K562 (cell line): ENCODE measurements at regions of chr22 and their contacts with region 1.

Region 1: DNA sequence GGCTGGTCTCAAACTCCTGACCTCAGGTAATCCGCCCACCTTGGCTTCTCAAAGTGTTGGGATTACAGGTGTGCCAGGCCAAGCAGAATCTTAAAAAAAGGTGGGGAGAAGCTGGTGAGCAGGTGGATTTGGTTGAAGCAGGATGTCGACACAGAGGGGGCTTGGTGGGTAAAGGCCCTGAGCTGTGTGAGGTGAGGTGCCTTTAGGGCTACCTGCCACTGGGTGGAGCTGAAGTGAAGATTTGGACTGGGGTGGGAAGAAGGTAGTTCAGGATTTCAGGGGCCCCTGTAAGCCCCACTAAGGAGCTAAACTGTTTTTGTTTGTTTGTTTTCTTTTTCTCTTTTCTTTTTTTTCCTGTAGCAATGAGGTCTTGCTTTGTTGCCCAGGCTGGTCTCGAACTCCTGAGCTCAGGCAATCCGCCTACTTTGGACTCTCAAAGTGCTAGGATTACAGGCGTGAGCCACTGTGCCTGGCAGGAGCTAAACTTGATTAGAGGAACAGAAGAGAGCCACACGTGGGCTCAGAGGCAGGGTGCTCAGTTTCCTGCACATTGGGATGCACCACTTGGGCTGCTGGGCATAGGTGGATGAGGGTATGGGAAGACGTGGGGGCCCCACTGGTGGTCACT is 6.0 kb downstream of the P2RX6 start:
- DNase-seq: peak; percentile 85 to 98 (median 96)
- ATAC-seq: peak; percentile 88
- H3K4me3 ChIP-seq: no peak overlapping the region
- H3K27ac ChIP-seq: no peak overlapping the region
- H3K4me1 ChIP-seq: peaks cover 7 to 31% of the 10 kb centered on the region in 2 experiments
- H3K27me3 ChIP-seq: peaks cover 3 to 16% of the 10 kb centered on the region in 2 experiments; a peak in 4 of 5 replicates
- CTCF ChIP-seq: peak; percentile 94 to 97 (median 97)
- EP300 ChIP-seq: no peak
- POLR2A ChIP-seq: no peak
- RAD21 ChIP-seq: peak in 1 of 2 experiments; percentile 93; a peak in 3 of 4 replicates

Region 2: DNA sequence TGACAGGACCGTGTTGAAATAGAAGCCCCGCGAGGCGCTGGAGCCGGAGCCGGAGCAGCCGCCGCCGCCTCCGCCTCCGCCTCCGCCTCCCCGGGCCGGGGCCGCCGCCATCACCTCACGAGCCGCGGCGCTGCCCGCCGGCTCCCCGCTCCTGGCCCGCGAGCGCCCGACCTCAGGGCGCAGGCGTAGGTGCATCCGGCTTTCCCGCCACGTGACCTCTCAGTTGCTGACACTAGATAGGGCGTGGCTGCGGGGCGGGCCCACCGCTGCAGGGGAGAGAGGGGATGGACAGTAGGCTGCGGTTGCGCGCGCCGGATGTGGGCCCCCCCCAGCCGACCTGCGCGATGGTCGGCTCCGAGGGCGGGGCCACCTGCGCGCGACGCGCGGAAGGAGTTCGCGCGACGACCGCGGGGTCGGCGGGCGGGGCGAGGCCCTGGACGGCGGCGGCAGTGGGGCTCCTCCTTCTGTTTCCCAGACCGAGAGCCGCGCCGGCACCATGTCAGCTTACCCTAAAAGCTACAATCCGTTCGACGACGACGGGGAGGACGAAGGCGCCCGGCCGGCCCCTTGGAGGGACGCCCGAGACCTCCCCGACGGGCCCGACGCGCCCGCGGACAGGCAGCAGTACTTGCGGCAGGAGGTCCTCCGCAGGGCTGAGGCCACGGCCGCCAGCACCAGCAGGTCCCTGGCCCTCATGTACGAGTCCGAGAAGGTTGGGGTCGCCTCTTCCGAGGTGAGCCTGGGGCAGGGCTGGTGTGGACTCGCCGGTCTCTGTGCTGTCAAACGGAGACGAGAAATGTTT is 162.1 kb before region 1 on chr22 and contains the starts of genes PI4KA and SNAP29:
- CTCF ChIA-PET with region 1: no interaction called
- POLR2A ChIA-PET with region 1: no interaction called
- in situ Hi-C with region 1: no loop called
- intact Hi-C with region 1: no loop called
- DNase-seq: peak; percentile 100
- ATAC-seq: peak; percentile 92
- H3K4me3 ChIP-seq: peak within 1 kb of the TSS; percentile 57
- H3K27ac ChIP-seq: peak within 1 kb of the TSS; percentile 79
- H3K4me1 ChIP-seq: peaks cover 53 to 78% of the 10 kb centered on the region in 2 experiments
- H3K27me3 ChIP-seq: no peaks in the 10 kb centered on the region
- CTCF ChIP-seq: peak in 1 of 3 experiments; percentile 42; a peak in 2 of 6 replicates
- EP300 ChIP-seq: peak; percentile 84
- POLR2A ChIP-seq: no peak
- RAD21 ChIP-seq: no peak
- polyA plus RNA-seq, gene PI4KA: 7.3 to 11.1 TPM
- polyA plus RNA-seq, gene SNAP29: 19.5 to 22.8 TPM

Region 3: GRCh38 chr22:21065230-21065854 is 44.4 kb after region 1 on chr22:
- CTCF ChIA-PET with region 1: no interaction called
- POLR2A ChIA-PET with region 1: interaction called, 3 read pairs
- in situ Hi-C with region 1: no loop called
- intact Hi-C with region 1: loop called (anchors 5 kb)
- DNase-seq: peak in 1 of 4 experiments; percentile 20
- ATAC-seq: no peak
- H3K4me3 ChIP-seq: no peak overlapping the region
- H3K27ac ChIP-seq: no peak overlapping the region
- H3K4me1 ChIP-seq: no peaks in the 10 kb centered on the region
- H3K27me3 ChIP-seq: peaks cover 60 to 71% of the 10 kb centered on the region in 2 experiments
- CTCF ChIP-seq: no peak
- EP300 ChIP-seq: no peak
- POLR2A ChIP-seq: no peak
- RAD21 ChIP-seq: no peak

Region 4: DNA sequence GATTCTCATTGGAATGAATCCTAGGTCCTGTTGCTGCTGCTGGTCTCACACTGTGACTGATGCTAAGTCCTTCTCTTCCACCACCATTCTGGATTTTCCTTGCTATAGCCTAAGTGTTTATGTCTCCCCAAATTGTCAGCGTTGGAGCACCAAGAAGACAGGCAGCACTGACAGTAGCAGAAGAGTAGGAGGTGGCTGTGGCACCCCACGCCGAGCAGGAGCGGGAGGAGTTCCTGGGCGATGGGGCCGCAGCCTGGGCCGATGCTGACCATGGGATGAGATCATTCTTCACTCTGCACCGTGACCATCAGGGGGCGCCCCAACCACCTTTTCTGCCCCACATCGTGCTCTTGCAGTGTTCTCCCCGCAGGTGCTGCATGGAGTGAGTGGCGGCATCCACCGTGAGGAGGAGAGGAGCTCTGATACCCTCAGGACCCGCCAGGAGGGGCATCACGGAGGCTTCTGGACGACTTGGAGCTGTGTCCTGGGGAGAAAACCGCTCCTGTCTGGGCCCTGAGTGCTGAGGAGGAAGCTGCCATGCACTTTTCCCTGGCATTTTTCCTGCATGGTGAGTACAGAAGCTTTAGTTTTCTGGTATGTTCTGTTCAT is 81.8 kb after region 1 on chr22:
- CTCF ChIA-PET with region 1: interaction called, 3 read pairs
- POLR2A ChIA-PET with region 1: interaction called, 3 read pairs
- in situ Hi-C with region 1: no loop called
- intact Hi-C with region 1: loop called (anchors 2 kb)
- DNase-seq: peak; percentile 98 to 100 (median 99)
- ATAC-seq: peak; percentile 99
- H3K4me3 ChIP-seq: no peak overlapping the region
- H3K27ac ChIP-seq: no peak overlapping the region
- H3K4me1 ChIP-seq: peaks cover 5 to 8% of the 10 kb centered on the region in 2 experiments; a peak in 4 of 5 replicates
- H3K27me3 ChIP-seq: peaks cover 15 to 16% of the 10 kb centered on the region in 2 experiments; a peak in 4 of 5 replicates
- CTCF ChIP-seq: peak in 2 of 3 experiments; percentile 99 to 100; a peak in 4 of 6 replicates
- EP300 ChIP-seq: peak; percentile 39; the same call in 1 of the 2 replicates
- POLR2A ChIP-seq: no peak
- RAD21 ChIP-seq: peak in 1 of 2 experiments; percentile 95; a peak in 2 of 4 replicates